ENCODE measurements at regions of chr15 and their contacts with region 1.

Region 1: GRCh38 chr15:56868170-56868569 is 50.3 kb upstream of the TCF12 start:
- DNase-seq: no peak
- H3K4me3 ChIP-seq: no peak overlapping the region
- H3K27ac ChIP-seq: no peak overlapping the region
- H3K4me1 ChIP-seq: no peaks in the 10 kb centered on the region
- H3K27me3 ChIP-seq: no peaks in the 10 kb centered on the region
- CTCF ChIP-seq: no peak
- POLR2A ChIP-seq: no peak

Region 2: DNA sequence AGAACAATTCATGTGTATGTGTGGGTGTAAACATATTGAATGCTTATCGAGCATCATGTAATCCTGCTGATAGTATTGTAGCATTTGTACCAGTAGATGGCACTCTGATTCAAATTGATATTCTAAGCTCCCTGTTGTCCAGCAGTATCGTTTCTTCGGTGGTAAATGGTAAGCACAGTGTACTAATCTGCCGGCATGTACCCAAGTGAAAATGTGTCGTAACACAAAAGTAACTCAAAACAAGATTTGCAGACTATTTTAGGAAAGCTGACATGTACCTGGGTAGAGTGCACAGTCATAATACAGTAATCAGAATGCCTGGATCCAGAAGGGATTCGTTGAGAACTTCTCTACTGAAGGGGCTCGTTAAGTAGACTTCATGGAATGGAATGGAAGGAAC is 371.5 kb before region 1 on chr15:
- intact Hi-C with region 1: loop called (anchors 1 kb)
- DNase-seq: no peak
- H3K4me3 ChIP-seq: peak overlapping the region in 1 of 2 donors; percentile 20
- H3K27ac ChIP-seq: no peak overlapping the region
- H3K4me1 ChIP-seq: peaks cover 4% of the 10 kb centered on the region
- H3K27me3 ChIP-seq: no peaks in the 10 kb centered on the region
- CTCF ChIP-seq: peak; percentile 47 to 82 (median 77)
- POLR2A ChIP-seq: no peak

Region 3: DNA sequence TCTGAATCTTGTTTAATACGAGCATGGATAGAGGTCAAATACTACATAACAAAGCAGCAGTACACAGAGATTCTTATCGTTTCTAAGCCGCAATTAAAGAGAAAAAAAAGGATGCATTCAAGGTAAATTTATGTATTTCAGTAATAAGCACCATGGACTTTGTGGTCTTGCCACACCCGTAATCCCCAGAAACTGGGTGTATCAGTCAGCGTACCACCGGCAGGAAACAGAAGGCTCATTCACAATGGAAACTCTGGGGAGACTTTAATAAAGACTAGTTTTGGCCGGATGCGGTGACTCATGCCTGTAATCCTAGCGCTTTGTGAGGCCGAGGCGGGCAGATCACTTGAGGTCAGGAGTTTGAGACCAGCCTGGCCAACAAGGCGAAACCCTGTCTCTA is 52.9 kb before region 1 on chr15:
- intact Hi-C with region 1: no loop called
- DNase-seq: no peak
- H3K4me3 ChIP-seq: no peak overlapping the region
- H3K27ac ChIP-seq: no peak overlapping the region
- H3K4me1 ChIP-seq: peaks cover 8% of the 10 kb centered on the region
- H3K27me3 ChIP-seq: no peaks in the 10 kb centered on the region
- CTCF ChIP-seq: no peak
- POLR2A ChIP-seq: no peak

Region 4: DNA sequence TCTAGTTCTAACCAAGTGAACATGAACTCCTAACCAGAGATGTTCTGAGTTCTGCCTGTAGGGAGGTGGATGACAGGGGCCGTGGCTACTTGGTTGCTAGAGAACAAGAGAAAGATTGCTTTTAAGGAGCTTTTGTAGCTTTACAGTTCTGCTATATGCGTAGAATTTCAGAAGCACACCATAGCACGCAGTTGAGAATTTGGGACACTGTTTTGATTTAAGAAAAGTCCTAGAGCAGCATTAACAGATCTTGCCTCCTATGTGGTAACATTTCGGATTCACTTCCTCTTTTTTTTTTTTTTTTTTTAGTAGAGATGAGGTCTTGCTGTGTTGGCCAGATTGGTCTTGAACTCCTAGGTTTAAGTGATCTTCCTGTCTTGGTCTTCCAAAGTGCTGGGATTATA is 232.0 kb after region 1 on chr15:
- intact Hi-C with region 1: no loop called
- DNase-seq: no peak
- H3K4me3 ChIP-seq: no peak overlapping the region
- H3K27ac ChIP-seq: no peak overlapping the region
- H3K4me1 ChIP-seq: no peaks in the 10 kb centered on the region
- H3K27me3 ChIP-seq: no peaks in the 10 kb centered on the region
- CTCF ChIP-seq: no peak
- POLR2A ChIP-seq: no peak

Measured in vagina (tissue), 2 donors.